Mammary epithelial cell (primary cell): ENCODE measurements at regions of chr9 and their contacts with region 1.

Region 1: GRCh38 chr9:12988253-12988652 is 213.4 kb downstream of the LURAP1L start:
- DNase-seq: no peak
- H3K4me3 ChIP-seq: no peak overlapping the region
- H3K27ac ChIP-seq: no peak overlapping the region
- H3K4me1 ChIP-seq: no peaks in the 10 kb centered on the region
- H3K27me3 ChIP-seq: no peaks in the 10 kb centered on the region
- CTCF ChIP-seq: no peak

Region 2: DNA sequence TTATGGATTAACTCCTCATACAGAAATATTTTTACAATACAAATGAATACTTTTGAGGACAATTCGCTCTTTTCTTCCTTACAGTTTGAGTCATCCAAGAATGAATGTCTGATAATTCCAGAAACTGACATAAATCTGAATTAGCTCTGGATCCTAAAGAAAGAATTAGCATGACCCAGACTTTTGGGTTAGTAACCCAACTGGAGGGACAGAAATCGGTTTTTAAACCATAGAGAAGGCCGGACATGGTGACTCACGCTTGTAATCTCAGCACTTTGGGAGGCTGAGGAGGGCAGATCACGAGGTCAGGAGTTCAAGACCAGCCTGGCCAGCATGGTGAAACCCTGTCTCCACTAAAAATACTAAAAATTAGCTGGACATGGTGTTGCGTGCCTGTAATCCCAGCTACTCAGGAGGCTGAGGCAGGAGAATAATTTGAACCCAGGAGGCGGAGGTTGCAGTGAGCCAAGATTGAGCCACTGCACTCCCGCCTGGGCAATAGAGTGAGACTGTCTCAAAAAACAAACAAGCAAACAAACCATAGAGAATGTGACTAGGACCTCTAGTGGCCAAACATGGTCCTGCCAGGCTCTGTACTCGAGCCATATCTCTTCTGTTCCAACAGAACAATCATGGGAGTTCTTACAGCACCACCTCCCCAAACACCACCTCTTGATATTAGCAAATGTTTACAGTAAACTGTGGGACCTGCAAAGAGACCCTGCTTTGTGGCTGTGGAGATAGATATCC is 168.6 kb before region 1 on chr9:
- CTCF ChIA-PET with region 1: no interaction called
- dilution Hi-C with region 1: no loop called
- in situ Hi-C with region 1: no loop called
- intact Hi-C with region 1: loop called (anchors 5 kb)
- DNase-seq: no peak
- H3K4me3 ChIP-seq: no peak overlapping the region
- H3K27ac ChIP-seq: peak overlapping the region; percentile 100
- H3K4me1 ChIP-seq: peaks cover 45% of the 10 kb centered on the region
- H3K27me3 ChIP-seq: no peaks in the 10 kb centered on the region
- CTCF ChIP-seq: peak; percentile 45 to 49

Region 3: GRCh38 chr9:12859704-12860251 is 128.5 kb before region 1 on chr9:
- CTCF ChIA-PET with region 1: no interaction called
- dilution Hi-C with region 1: no loop called
- in situ Hi-C with region 1: no loop called
- intact Hi-C with region 1: no loop called
- DNase-seq: peak; percentile 96
- H3K4me3 ChIP-seq: peak overlapping the region; percentile 23 to 39 (median 34)
- H3K27ac ChIP-seq: peak overlapping the region; percentile 99
- H3K4me1 ChIP-seq: peaks cover 26% of the 10 kb centered on the region
- H3K27me3 ChIP-seq: no peaks in the 10 kb centered on the region
- CTCF ChIP-seq: no peak

Region 4: GRCh38 chr9:12884737-12885414 is 103.4 kb before region 1 on chr9:
- CTCF ChIA-PET with region 1: no interaction called
- dilution Hi-C with region 1: no loop called
- in situ Hi-C with region 1: no loop called
- intact Hi-C with region 1: loop called (anchors 5 kb)
- DNase-seq: peak; percentile 77
- H3K4me3 ChIP-seq: no peak overlapping the region
- H3K27ac ChIP-seq: no peak overlapping the region
- H3K4me1 ChIP-seq: no peaks in the 10 kb centered on the region
- H3K27me3 ChIP-seq: no peaks in the 10 kb centered on the region
- CTCF ChIP-seq: peak; percentile 61 to 71